Dendritic cell treated with granulocyte-macrophage colony-stimulating factor and Interleukin-4, amounts not matched to agents 40 ng/mL and 50 ng/mL, for 4 days (primary cell): ENCODE measurements at regions of chr12 and their contacts with region 1.

Region 1: GRCh38 chr12:1812650-1813302 is 7.6 kb upstream of the LRTM2 start:
- H3K4me3 Mint-ChIP-seq: peak overlapping the region; percentile 54
- H3K27ac Mint-ChIP-seq: peak overlapping the region; percentile 95
- H3K4me1 Mint-ChIP-seq: peaks cover 81% of the 10 kb centered on the region
- H3K27me3 Mint-ChIP-seq: peaks cover 3% of the 10 kb centered on the region

Region 2: GRCh38 chr12:1916371-1917171 is 103.8 kb after region 1 on chr12:
- intact Hi-C with region 1: loop called (anchors 5 kb)
- H3K4me3 Mint-ChIP-seq: no peak overlapping the region
- H3K27ac Mint-ChIP-seq: peak overlapping the region; percentile 29
- H3K4me1 Mint-ChIP-seq: peaks cover 53% of the 10 kb centered on the region
- H3K27me3 Mint-ChIP-seq: peaks cover 10% of the 10 kb centered on the region